T-cell (primary cell): ENCODE measurements at regions of chr15 and their contacts with region 1.

Region 1: GRCh38 chr15:41258706-41259471 is 27.8 kb downstream of the CHP1 start:
- DNase-seq: no peak
- ATAC-seq: no peak
- H3K4me3 ChIP-seq: no peak overlapping the region
- H3K4me3 Mint-ChIP-seq: no peak overlapping the region
- H3K27ac ChIP-seq: no peak overlapping the region
- H3K27ac Mint-ChIP-seq: no peak overlapping the region
- H3K4me1 ChIP-seq: no peaks in the 10 kb centered on the region
- H3K4me1 Mint-ChIP-seq: peaks cover 0 to 4% (median 0%) of the 10 kb centered on the region in 3 donors
- H3K27me3 ChIP-seq: no peaks in the 10 kb centered on the region
- H3K27me3 Mint-ChIP-seq: no peaks in the 10 kb centered on the region

Region 2: DNA sequence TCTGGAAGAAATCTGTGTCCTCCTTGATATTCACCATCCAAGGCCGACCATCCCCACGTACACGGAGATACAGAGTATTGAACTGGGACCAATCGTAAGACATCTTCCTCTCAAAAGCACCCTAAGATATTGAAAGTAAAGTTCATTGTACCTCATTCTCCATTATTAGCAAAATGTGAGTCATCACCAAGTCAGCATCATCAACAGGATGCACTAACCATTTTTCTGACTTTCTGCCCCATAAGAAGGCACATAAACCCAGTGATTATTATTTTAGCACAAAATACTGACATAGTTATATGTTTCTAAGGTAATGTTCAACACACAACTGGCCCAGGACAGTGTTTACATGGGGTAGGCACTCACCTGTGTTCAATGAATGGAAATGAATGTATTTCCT is 136.0 kb after region 1 on chr15:
- CTCF ChIA-PET with region 1: interaction called in 1 of 2 experiments, 10 read pairs
- POLR2A ChIA-PET with region 1: no interaction called
- DNase-seq: no peak
- ATAC-seq: no peak
- H3K4me3 ChIP-seq: no peak overlapping the region
- H3K4me3 Mint-ChIP-seq: no peak overlapping the region
- H3K27ac ChIP-seq: no peak overlapping the region
- H3K27ac Mint-ChIP-seq: no peak overlapping the region
- H3K4me1 ChIP-seq: no peaks in the 10 kb centered on the region
- H3K4me1 Mint-ChIP-seq: peaks cover 18 to 22% (median 20%) of the 10 kb centered on the region in 3 donors
- H3K27me3 ChIP-seq: no peaks in the 10 kb centered on the region
- H3K27me3 Mint-ChIP-seq: no peaks in the 10 kb centered on the region